Cardiac septum (tissue), 1 donor: ENCODE measurements at regions of chr3 and their contacts with region 1.

Region 1: DNA sequence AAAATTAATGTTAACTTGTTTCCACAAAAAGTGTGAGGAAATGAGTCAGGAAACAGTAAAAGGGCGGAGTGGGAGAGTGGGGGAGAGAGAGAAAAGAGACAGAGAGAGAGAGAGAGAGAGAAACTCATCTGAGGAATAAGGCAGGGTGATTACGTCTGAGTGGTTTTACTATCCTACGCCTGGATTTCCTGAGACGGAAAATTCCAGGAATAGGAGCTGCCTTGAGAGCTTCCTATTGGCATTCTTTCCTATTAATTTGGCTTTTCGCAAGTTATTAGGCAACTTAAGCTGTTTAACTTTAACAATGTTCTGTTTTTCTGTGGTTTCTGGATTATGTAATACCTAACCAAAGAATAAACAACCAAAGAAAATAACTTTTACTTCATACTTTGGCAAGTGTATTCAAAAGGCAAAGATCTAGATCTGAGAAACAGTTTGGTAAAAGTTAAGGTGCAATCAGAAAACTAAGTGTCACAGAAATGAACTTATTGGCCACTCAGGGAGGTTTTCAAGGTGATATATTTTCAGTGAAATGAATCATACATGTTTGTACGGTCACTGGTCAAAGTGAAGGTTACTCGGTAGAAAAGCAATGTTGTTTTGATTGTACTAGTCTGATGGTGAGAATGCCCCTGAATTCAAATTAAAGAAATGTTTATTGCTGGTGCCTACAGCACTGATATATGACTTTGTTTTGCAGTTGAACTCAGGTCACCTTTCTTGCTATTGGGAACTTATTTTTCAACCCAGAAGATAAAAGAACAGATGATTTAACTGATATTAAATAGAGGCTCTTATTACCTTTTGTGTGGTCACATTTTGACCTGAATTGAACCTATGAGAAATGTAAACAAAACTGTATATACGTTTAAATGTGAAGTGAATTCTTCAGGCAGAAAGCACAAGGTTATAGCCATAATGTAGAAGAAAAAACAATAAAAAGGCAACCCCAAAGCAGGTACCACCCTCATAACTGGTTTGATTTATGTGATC is 39.9 kb upstream of the TNFSF10 start:
- DNase-seq: no peak

Region 2: GRCh38 chr3:172511783-172512762 is 51.1 kb before region 1 on chr3:
- intact Hi-C with region 1: loop called (anchors 5 kb)
- DNase-seq: peak; percentile 94

Region 3: DNA sequence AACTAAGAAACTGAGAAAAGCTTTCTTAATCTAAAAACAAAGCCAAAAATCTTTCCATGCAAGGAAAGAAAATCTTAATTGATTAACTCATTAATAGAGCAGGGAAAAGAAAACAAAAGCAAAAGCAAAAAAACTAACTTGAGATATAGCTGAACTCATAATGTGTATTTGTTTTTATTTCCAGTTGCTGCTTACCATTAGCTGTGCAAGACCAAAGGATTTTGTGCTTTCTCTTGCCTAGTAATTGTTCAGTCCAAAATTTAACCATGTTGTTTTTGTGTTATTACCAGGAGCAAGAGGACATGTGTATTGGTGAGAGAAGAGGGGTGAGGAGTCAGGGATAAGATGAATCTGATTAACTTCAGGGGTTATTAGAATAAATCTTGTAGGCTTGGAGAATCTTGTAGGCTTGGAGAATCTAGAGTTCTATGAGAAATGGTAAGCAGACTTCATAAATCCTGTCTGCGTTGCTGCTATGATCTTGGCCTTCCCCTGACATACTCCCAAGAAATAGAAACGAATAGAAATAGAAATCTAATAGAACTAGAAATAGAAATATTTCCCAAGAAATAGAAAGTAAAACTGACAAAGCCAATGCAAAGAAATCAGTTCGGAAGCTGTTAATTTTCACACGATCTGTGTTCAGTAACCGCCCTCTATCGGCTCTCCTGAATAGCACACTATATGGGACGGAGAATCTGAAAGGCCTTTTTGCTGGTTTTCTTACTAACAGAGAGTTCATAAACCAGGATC is 32.6 kb after region 1 on chr3:
- intact Hi-C with region 1: loop called (anchors 1 kb)
- DNase-seq: no peak

Region 4: GRCh38 chr3:172710664-172711453 is 147.7 kb after region 1 on chr3 and contains the start of gene NCEH1:
- intact Hi-C with region 1: no loop called
- DNase-seq: peak; percentile 96
- total RNA-seq, gene NCEH1: 18.5 TPM